Common myeloid progenitor, CD34-positive (primary cell): ENCODE measurements at regions of chr1 and their contacts with region 1.

Region 1: DNA sequence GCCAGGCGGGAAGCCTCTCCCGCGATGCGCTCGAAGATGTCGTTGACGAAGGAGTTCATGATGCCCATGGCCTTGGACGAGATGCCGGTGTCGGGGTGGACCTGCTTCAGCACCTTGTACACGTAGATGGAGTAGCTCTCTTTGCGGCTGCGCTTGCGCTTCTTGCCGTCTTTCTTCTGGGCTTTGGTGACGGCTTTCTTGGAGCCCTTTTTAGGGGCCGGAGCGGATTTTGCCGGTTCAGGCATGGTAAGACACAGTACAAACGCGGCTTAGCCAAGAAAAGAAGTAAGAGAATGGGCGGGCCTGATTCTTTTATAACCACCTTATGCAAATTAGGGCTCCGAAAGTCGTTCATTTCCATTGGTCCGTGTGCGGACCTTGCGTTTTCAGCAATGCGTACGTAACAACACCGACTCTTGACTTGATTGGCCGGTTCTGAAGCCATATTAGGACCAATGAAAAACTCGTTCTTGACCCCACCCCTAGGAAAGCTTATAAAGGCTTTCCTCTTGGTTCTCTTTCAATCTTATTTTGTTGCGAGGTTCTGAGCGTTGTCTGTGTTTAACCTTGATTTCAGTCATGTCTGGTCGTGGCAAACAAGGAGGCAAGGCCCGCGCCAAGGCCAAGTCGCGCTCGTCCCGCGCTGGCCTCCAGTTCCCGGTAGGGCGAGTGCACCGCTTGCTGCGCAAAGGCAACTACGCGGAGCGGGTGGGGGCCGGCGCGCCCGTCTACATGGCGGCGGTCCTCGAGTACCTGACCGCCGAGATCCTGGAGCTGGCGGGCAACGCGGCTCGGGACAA is 12.8 kb upstream of the BOLA1 start:
- DNase-seq: peak; percentile 99 to 100 (median 99)
- H3K4me3 ChIP-seq: peak overlapping the region; percentile 75 to 99 (median 88)
- H3K27ac ChIP-seq: peak overlapping the region; percentile 89 to 99
- H3K4me1 ChIP-seq: peaks cover 9 to 36% (median 21%) of the 10 kb centered on the region in 4 experiments
- H3K27me3 ChIP-seq: no peaks in the 10 kb centered on the region

Region 2: DNA sequence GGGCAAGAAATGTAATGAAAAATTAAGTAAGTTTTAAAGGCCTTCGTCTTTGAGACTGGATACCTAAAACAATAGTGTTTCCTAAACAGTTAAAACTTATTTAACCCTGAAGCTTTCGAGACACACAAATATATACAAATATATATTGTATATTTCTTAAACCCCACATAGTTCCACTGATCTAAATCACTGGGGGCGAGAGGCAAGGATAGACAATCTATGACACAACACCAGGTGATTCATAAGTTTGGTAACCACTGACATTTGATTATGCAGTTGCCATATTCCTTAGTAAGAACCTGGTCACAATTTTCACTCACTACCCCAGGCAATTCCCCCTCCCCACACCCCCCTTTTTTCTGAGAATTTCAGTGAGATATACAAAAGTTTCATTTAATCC is 42.5 kb before region 1 on chr1:
- CTCF ChIA-PET with region 1: interaction called, 16 read pairs
- POLR2A ChIA-PET with region 1: interaction called, 11 read pairs
- DNase-seq: peak in 2 of 3 donors; percentile 38 to 52
- H3K4me3 ChIP-seq: peak overlapping the region in 6 of 7 experiments; percentile 77 to 100 (median 90)
- H3K27ac ChIP-seq: peak overlapping the region; percentile 48 to 85
- H3K4me1 ChIP-seq: peaks cover 22 to 52% (median 44%) of the 10 kb centered on the region in 4 experiments
- H3K27me3 ChIP-seq: no peaks in the 10 kb centered on the region

Region 3: GRCh38 chr1:149899460-149900293 is 13.1 kb after region 1 on chr1 and contains the start of gene BOLA1:
- CTCF ChIA-PET with region 1: interaction called, 8 read pairs
- POLR2A ChIA-PET with region 1: interaction called, 12 read pairs
- DNase-seq: peak; percentile 87 to 94 (median 91)
- H3K4me3 ChIP-seq: peak within 1 kb of the TSS; percentile 32 to 86 (median 68)
- H3K27ac ChIP-seq: peak within 1 kb of the TSS in 1 of 2 experiments; percentile 67
- H3K4me1 ChIP-seq: peaks cover 0 to 14% (median 13%) of the 10 kb centered on the region in 4 experiments
- H3K27me3 ChIP-seq: no peaks in the 10 kb centered on the region

Region 4: DNA sequence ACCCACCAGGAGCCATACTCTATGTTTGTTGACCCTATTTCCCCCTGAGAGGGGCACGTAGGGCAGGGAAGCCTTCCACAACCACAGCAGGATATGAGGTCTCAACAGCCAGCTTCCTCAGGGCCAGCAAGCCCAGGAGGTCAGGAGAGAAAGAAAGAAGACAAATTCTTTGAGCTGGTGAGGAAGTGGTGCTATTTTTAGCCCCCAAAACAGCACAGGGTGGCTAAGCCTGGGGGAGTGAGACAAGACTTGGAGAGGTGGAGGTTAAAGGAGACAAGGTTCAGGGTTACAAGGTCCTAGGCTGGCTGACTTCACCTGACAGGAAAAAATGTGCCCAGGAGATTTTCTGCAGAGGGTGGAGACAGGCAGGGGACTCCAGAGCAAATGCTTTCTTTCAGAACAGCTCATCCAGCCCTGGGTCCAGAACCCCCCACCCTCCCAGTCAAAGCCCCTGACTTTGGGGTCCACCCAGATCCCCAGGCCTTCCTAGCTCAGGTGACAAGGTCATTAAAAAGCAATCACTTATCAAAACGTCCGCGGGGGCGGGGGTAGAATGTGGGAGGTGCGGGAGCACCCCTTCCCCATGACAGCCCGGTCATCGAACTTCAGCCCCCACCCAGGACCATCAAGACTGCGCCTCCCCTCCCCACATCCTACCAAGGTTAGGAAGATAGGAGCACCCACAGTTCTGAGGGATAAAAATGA is 29.7 kb after region 1 on chr1:
- CTCF ChIA-PET with region 1: interaction called, 4 read pairs
- POLR2A ChIA-PET with region 1: interaction called, 13 read pairs
- DNase-seq: peak in 2 of 3 donors; percentile 35 to 48
- H3K4me3 ChIP-seq: peak overlapping the region; percentile 26 to 97 (median 81)
- H3K27ac ChIP-seq: peak overlapping the region; percentile 33 to 72
- H3K4me1 ChIP-seq: peaks cover 8 to 41% (median 35%) of the 10 kb centered on the region in 4 experiments
- H3K27me3 ChIP-seq: no peaks in the 10 kb centered on the region

Region 5: DNA sequence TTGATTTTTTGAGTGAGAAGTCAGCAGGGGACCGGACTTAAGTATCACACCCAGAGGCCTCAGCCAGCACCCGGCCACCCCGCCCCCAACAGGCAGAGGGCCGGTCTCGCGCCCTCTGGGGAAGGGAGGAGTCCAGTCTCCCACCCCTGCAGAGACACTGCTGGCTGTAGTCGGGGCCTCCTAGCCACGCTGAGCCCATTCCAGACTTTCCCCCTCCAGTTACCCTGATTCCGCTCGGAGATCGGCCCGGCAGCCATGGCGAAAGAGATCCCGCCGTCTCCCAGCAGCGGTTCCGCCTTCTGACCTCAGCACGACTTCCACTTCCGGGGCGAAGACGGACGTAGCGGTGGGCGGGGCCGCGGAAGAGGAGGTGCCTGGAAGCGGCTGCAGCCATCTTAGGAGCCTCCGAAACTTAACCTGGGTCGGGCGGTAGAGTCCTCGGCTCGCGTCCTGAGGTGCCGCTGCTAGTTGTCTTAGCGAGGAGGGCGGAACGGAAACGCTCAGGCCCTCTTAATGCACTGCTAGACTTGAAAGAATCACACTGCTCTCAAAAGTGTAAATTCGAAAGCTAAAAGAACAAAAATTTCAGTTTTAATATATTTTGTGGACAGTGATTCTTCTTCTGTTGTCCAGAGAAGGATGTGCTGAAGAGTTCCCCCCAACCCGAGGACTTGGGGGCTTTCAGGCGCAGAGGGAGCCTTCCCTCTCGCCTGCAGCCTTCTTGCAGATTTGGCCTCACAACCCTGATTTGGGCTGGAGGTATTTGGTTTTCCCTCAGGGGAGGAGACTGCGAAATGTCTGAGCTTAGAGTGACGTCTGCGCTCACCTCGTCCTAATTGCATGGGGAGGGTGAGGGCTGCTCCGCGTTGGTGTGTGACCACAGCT is 41.1 kb after region 1 on chr1 and contains the start of gene SF3B4:
- CTCF ChIA-PET with region 1: interaction called, 5 read pairs
- POLR2A ChIA-PET with region 1: interaction called, 17 read pairs
- DNase-seq: peak; percentile 95 to 97 (median 96)
- H3K4me3 ChIP-seq: peak within 1 kb of the TSS; percentile 85 to 99 (median 90)
- H3K27ac ChIP-seq: peak within 1 kb of the TSS; percentile 88 to 92
- H3K4me1 ChIP-seq: peaks cover 7 to 33% (median 18%) of the 10 kb centered on the region in 4 experiments
- H3K27me3 ChIP-seq: no peaks in the 10 kb centered on the region